B cell (primary cell): ENCODE measurements at regions of chr12 and their contacts with region 1.

Region 1: GRCh38 chr12:92170050-92170449 is 24.4 kb upstream of the BTG1 start:
- DNase-seq: no peak
- ATAC-seq: no peak
- H3K4me3 ChIP-seq: no peak overlapping the region
- H3K4me3 Mint-ChIP-seq: peak overlapping the region; percentile 29
- H3K27ac ChIP-seq: peak overlapping the region; percentile 91 to 95
- H3K27ac Mint-ChIP-seq: peak overlapping the region; percentile 75
- H3K4me1 ChIP-seq: peaks cover 46 to 63% of the 10 kb centered on the region in 2 donors
- H3K4me1 Mint-ChIP-seq: peaks cover 68% of the 10 kb centered on the region
- H3K27me3 ChIP-seq: no peaks in the 10 kb centered on the region
- H3K27me3 Mint-ChIP-seq: no peaks in the 10 kb centered on the region
- CTCF ChIP-seq: no peak

Region 2: GRCh38 chr12:91991399-91992187 is 178.5 kb before region 1 on chr12:
- CTCF ChIA-PET with region 1: no interaction called
- POLR2A ChIA-PET with region 1: no interaction called
- intact Hi-C with region 1: no loop called
- DNase-seq: peak; percentile 58
- ATAC-seq: peak; percentile 61
- H3K4me3 ChIP-seq: no peak overlapping the region
- H3K4me3 Mint-ChIP-seq: no peak overlapping the region
- H3K27ac ChIP-seq: no peak overlapping the region
- H3K27ac Mint-ChIP-seq: no peak overlapping the region
- H3K4me1 ChIP-seq: no peaks in the 10 kb centered on the region
- H3K4me1 Mint-ChIP-seq: peaks cover 3% of the 10 kb centered on the region
- H3K27me3 ChIP-seq: no peaks in the 10 kb centered on the region
- H3K27me3 Mint-ChIP-seq: no peaks in the 10 kb centered on the region
- CTCF ChIP-seq: peak; percentile 34

Region 3: GRCh38 chr12:92049403-92049802 is 120.6 kb before region 1 on chr12:
- CTCF ChIA-PET with region 1: no interaction called
- POLR2A ChIA-PET with region 1: no interaction called
- intact Hi-C with region 1: no loop called
- DNase-seq: peak; percentile 54
- ATAC-seq: peak; percentile 91
- H3K4me3 ChIP-seq: no peak overlapping the region
- H3K4me3 Mint-ChIP-seq: peak overlapping the region; percentile 20
- H3K27ac ChIP-seq: no peak overlapping the region
- H3K27ac Mint-ChIP-seq: peak overlapping the region; percentile 57
- H3K4me1 ChIP-seq: peaks cover 9 to 10% of the 10 kb centered on the region in 2 donors
- H3K4me1 Mint-ChIP-seq: peaks cover 21% of the 10 kb centered on the region
- H3K27me3 ChIP-seq: no peaks in the 10 kb centered on the region
- H3K27me3 Mint-ChIP-seq: no peaks in the 10 kb centered on the region
- CTCF ChIP-seq: no peak

Region 4: DNA sequence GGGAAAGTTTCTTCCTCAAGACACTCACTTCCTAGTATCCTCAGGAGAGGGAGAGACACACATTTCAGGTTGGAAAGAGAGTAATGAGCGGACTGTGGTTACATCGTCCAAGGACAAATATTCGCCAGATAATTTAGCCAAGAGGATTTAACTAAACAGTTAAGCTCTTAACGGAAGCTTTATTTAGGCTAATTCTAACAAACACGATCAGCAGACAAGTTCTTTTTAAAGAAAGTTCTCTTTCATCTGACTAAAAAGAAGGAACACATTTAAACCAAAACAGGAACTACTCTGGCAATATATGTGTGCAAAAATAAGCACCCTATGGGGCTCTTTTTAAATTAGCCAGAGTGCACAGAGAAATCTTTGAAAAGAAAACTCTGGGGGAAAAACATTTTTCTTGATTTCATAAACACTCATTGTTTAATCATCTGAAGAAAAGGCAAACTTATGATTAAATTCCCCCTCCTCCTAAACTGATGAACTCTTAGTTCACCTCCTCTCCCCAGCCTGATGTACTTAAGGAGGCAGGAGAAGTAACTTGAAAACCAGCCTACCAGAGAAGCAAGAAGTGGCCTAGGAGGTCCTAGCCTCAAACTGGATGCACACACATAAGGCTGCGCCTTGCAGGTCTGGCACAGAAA is 11.1 kb before region 1 on chr12:
- CTCF ChIA-PET with region 1: interaction called, 13 read pairs
- POLR2A ChIA-PET with region 1: interaction called, 7 read pairs
- intact Hi-C with region 1: loop called (anchors 1 kb)
- DNase-seq: peak; percentile 67
- ATAC-seq: peak; percentile 69
- H3K4me3 ChIP-seq: peak overlapping the region; percentile 9 to 55 (median 41)
- H3K4me3 Mint-ChIP-seq: peak overlapping the region; percentile 81
- H3K27ac ChIP-seq: peak overlapping the region; percentile 87 to 89
- H3K27ac Mint-ChIP-seq: peak overlapping the region; percentile 88
- H3K4me1 ChIP-seq: peaks cover 79 to 82% of the 10 kb centered on the region in 2 donors
- H3K4me1 Mint-ChIP-seq: peaks cover 87% of the 10 kb centered on the region
- H3K27me3 ChIP-seq: no peaks in the 10 kb centered on the region
- H3K27me3 Mint-ChIP-seq: no peaks in the 10 kb centered on the region
- CTCF ChIP-seq: no peak

Region 5: GRCh38 chr12:92208613-92209121 is 38.6 kb after region 1 on chr12:
- CTCF ChIA-PET with region 1: no interaction called
- POLR2A ChIA-PET with region 1: interaction called, 4 read pairs
- intact Hi-C with region 1: loop called (anchors 5 kb)
- DNase-seq: peak; percentile 45
- ATAC-seq: peak; percentile 88
- H3K4me3 ChIP-seq: peak overlapping the region; percentile 7 to 64 (median 13)
- H3K4me3 Mint-ChIP-seq: peak overlapping the region; percentile 81
- H3K27ac ChIP-seq: peak overlapping the region; percentile 9 to 52
- H3K27ac Mint-ChIP-seq: peak overlapping the region; percentile 83
- H3K4me1 ChIP-seq: peaks cover 20 to 26% of the 10 kb centered on the region in 2 donors
- H3K4me1 Mint-ChIP-seq: peaks cover 31% of the 10 kb centered on the region
- H3K27me3 ChIP-seq: no peaks in the 10 kb centered on the region
- H3K27me3 Mint-ChIP-seq: no peaks in the 10 kb centered on the region
- CTCF ChIP-seq: no peak

Region 6: DNA sequence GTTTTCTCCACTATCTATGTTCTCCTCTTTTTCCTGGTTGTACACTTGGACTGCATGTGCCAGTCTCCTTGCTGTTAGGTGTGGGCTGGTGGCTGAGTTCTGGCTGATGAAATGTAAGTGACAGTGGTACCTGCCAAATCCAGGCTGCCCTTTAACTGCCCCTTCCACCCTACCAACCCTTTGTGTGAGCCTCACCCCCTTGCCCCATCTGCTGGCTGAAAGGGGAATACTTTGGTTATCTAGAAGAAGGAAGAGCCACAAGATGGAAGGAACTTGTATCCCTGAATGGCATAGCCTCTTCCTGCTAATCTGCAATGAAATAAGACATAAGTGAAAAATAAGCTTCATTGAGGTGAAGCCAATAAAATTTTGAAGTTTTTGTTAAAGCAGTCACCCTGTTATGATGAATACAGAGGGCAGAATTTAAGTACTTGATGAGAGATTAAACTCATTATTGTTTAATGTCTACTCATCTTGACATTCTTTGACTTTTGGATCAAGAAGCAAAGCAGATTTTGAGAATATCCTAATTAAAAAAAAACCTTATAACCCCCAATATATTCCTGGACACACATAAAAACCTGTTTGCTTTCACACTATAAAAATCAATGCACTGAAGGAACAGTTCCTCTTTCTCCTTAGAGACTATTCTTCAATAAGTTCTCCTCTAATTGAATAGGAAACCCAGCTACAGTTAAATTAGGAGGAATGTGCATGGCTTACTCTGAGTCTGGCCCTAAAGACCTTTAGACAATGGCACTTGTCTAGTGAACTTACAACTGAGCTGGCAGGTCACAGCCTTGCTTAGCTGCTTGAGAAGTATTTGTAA is 238.2 kb after region 1 on chr12:
- CTCF ChIA-PET with region 1: interaction called, 12 read pairs
- POLR2A ChIA-PET with region 1: interaction called, 5 read pairs
- intact Hi-C with region 1: no loop called
- DNase-seq: peak; percentile 74
- ATAC-seq: peak; percentile 49
- H3K4me3 ChIP-seq: no peak overlapping the region
- H3K4me3 Mint-ChIP-seq: peak overlapping the region; percentile 0
- H3K27ac ChIP-seq: peak overlapping the region; percentile 40 to 71
- H3K27ac Mint-ChIP-seq: peak overlapping the region; percentile 88
- H3K4me1 ChIP-seq: peaks cover 43% of the 10 kb centered on the region in 2 donors
- H3K4me1 Mint-ChIP-seq: peaks cover 67% of the 10 kb centered on the region
- H3K27me3 ChIP-seq: no peaks in the 10 kb centered on the region
- H3K27me3 Mint-ChIP-seq: no peaks in the 10 kb centered on the region
- CTCF ChIP-seq: peak; percentile 57

Region 7: GRCh38 chr12:92593734-92594402 is 423.8 kb after region 1 on chr12:
- CTCF ChIA-PET with region 1: no interaction called
- POLR2A ChIA-PET with region 1: no interaction called
- intact Hi-C with region 1: loop called (anchors 1 kb)
- DNase-seq: peak; percentile 94
- ATAC-seq: peak; percentile 93
- H3K4me3 ChIP-seq: peak overlapping the region in 2 of 5 experiments; percentile 20 to 22
- H3K4me3 Mint-ChIP-seq: peak overlapping the region; percentile 69
- H3K27ac ChIP-seq: peak overlapping the region; percentile 86 to 97
- H3K27ac Mint-ChIP-seq: peak overlapping the region; percentile 94
- H3K4me1 ChIP-seq: peaks cover 21 to 25% of the 10 kb centered on the region in 2 donors
- H3K4me1 Mint-ChIP-seq: peaks cover 34% of the 10 kb centered on the region
- H3K27me3 ChIP-seq: no peaks in the 10 kb centered on the region
- H3K27me3 Mint-ChIP-seq: no peaks in the 10 kb centered on the region
- CTCF ChIP-seq: no peak